Mammary epithelial cell (primary cell): ENCODE measurements at regions of chr7 and their contacts with region 1.

Region 1: DNA sequence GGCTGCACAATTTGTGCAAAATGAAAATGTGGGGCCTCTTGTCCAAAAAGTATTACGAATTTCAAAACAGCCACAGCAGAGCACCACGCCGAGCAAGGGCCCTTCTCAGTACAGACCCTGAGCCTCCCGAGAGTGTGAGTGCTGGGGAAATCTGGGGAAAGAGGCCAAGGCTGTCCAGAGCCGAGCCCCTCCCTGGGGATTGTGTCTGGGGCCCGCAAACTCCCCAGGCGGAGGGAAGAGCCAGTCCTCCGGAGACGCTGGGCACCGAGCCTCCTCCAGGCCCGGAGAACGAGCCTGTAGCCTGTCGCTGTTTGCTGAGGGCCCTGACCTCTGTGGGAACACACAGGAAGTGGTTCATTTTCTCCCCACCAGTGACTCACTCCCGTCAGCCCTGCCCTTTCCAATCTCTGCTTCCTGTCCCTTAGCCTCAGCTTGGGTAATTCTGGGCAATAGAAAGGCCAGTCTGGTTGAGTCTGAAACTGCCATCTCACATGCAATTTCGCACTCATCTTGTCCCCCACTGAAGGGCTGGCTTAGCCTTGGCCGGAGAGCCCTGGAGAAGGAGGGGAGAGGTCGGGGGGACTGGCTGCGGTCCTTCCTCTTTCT is 19.5 kb upstream of the GNA12 start:
- DNase-seq: peak; percentile 92
- H3K4me3 ChIP-seq: no peak overlapping the region
- H3K27ac ChIP-seq: peak overlapping the region; percentile 64
- H3K4me1 ChIP-seq: peaks cover 22% of the 10 kb centered on the region
- H3K27me3 ChIP-seq: no peaks in the 10 kb centered on the region
- CTCF ChIP-seq: no peak

Region 2: DNA sequence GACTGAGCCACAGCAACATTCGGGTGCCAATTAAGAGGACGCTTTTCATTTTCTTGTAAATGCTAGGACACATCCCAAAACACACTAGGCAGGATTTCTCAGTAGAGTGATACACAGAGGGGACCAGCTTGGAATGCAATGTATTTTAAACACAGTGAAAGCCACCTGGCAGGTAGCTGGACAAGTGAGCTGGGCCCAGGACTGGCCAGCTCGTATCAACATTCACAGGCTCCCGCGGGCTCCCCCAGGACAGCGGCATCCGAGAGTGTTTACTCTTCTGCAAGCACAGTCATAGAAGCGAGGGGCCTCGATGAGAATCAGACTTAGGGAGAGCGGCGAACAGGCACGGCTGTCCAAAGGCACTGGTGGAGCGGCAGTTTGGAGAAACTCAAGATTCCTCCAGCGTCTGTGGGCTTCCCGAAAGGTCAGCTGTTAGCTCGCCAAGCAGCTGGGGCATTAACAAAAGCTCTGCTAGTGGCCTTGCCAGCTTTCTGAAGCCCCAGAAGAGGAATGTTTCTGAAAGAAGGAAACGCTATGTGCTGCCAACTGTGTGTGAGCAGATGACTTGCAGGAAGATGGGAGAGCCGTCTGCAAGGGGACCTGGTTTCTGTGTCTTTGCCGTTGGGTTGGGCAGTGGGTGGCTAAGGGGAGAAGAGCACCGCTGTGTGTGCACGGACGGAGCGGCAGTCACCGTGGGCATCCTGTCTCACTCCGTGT is 133.7 kb before region 1 on chr7:
- CTCF ChIA-PET with region 1: no interaction called
- dilution Hi-C with region 1: no loop called
- in situ Hi-C with region 1: no loop called
- intact Hi-C with region 1: no loop called
- DNase-seq: no peak
- H3K4me3 ChIP-seq: no peak overlapping the region
- H3K27ac ChIP-seq: no peak overlapping the region
- H3K4me1 ChIP-seq: no peaks in the 10 kb centered on the region
- H3K27me3 ChIP-seq: no peaks in the 10 kb centered on the region
- CTCF ChIP-seq: no peak

Region 3: GRCh38 chr7:2800931-2801688 is 62.5 kb before region 1 on chr7:
- CTCF ChIA-PET with region 1: no interaction called
- dilution Hi-C with region 1: loop called (anchors 10 kb)
- in situ Hi-C with region 1: no loop called
- intact Hi-C with region 1: no loop called
- DNase-seq: peak; percentile 35
- H3K4me3 ChIP-seq: no peak overlapping the region
- H3K27ac ChIP-seq: no peak overlapping the region
- H3K4me1 ChIP-seq: peaks cover 13% of the 10 kb centered on the region
- H3K27me3 ChIP-seq: no peaks in the 10 kb centered on the region
- CTCF ChIP-seq: no peak

Region 4: GRCh38 chr7:3000566-3000965 is 137.0 kb after region 1 on chr7:
- CTCF ChIA-PET with region 1: no interaction called
- dilution Hi-C with region 1: no loop called
- in situ Hi-C with region 1: no loop called
- intact Hi-C with region 1: loop called (anchors 5 kb)
- DNase-seq: no peak
- H3K4me3 ChIP-seq: no peak overlapping the region
- H3K27ac ChIP-seq: no peak overlapping the region
- H3K4me1 ChIP-seq: no peaks in the 10 kb centered on the region
- H3K27me3 ChIP-seq: no peaks in the 10 kb centered on the region
- CTCF ChIP-seq: peak in 1 of 2 donors; percentile 2

Region 5: GRCh38 chr7:3154912-3155494 is 291.4 kb after region 1 on chr7:
- CTCF ChIA-PET with region 1: interaction called, 15 read pairs
- dilution Hi-C with region 1: no loop called
- in situ Hi-C with region 1: no loop called
- intact Hi-C with region 1: loop called (anchors 1 kb)
- DNase-seq: peak; percentile 46
- H3K4me3 ChIP-seq: no peak overlapping the region
- H3K27ac ChIP-seq: no peak overlapping the region
- H3K4me1 ChIP-seq: no peaks in the 10 kb centered on the region
- H3K27me3 ChIP-seq: no peaks in the 10 kb centered on the region
- CTCF ChIP-seq: peak; percentile 66 to 74

Region 6: GRCh38 chr7:4641667-4642467 is 1778.3 kb after region 1 on chr7:
- CTCF ChIA-PET with region 1: no interaction called
- dilution Hi-C with region 1: no loop called
- in situ Hi-C with region 1: loop called in 1 of 2 experiments (anchors 25 kb)
- intact Hi-C with region 1: no loop called
- DNase-seq: peak; percentile 83
- H3K4me3 ChIP-seq: peak overlapping the region; percentile 77 to 93 (median 81)
- H3K27ac ChIP-seq: peak overlapping the region; percentile 48
- H3K4me1 ChIP-seq: peaks cover 6% of the 10 kb centered on the region
- H3K27me3 ChIP-seq: no peaks in the 10 kb centered on the region
- CTCF ChIP-seq: peak; percentile 27 to 49